Activated naive CD4-positive, alpha-beta T cell treated with anti-CD3 and anti-CD28 coated beads for 36 hours (primary cell): ENCODE measurements at regions of chr1 and their contacts with region 1.

Region 1: GRCh38 chr1:54406339-54407153 is at the start of gene SSBP3:
- DNase-seq: peak; percentile 89
- H3K4me3 Mint-ChIP-seq: peak within 1 kb of the TSS; percentile 83
- H3K27ac Mint-ChIP-seq: peak within 1 kb of the TSS; percentile 93
- H3K4me1 Mint-ChIP-seq: peaks cover 61% of the 10 kb centered on the region
- H3K27me3 Mint-ChIP-seq: no peaks in the 10 kb centered on the region
- total RNA-seq, gene SSBP3: 55.0 to 58.3 TPM

Region 2: DNA sequence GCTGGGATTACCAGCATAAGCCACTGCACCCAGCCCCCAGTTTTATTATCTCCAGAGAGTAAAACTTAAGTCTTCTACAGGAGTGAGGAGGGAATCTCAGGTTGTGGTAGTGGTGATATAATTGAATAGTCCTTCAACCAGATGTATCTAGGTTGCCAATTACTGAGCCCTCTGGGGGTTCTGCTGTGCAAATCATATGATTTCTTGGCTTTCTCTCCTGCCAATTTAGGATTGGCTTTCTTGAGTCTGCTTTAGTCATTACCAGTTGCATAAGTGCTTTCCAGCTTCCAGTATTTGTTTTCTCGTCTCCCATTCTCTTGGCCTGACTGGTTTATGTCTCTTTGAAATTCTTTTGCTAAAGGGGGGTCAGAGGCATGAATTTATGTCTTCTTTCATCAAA is 1198.8 kb before region 1 on chr1:
- CTCF ChIA-PET with region 1: no interaction called
- intact Hi-C with region 1: no loop called
- DNase-seq: no peak
- H3K4me3 Mint-ChIP-seq: no peak overlapping the region
- H3K27ac Mint-ChIP-seq: no peak overlapping the region
- H3K4me1 Mint-ChIP-seq: no peaks in the 10 kb centered on the region
- H3K27me3 Mint-ChIP-seq: no peaks in the 10 kb centered on the region

Region 3: DNA sequence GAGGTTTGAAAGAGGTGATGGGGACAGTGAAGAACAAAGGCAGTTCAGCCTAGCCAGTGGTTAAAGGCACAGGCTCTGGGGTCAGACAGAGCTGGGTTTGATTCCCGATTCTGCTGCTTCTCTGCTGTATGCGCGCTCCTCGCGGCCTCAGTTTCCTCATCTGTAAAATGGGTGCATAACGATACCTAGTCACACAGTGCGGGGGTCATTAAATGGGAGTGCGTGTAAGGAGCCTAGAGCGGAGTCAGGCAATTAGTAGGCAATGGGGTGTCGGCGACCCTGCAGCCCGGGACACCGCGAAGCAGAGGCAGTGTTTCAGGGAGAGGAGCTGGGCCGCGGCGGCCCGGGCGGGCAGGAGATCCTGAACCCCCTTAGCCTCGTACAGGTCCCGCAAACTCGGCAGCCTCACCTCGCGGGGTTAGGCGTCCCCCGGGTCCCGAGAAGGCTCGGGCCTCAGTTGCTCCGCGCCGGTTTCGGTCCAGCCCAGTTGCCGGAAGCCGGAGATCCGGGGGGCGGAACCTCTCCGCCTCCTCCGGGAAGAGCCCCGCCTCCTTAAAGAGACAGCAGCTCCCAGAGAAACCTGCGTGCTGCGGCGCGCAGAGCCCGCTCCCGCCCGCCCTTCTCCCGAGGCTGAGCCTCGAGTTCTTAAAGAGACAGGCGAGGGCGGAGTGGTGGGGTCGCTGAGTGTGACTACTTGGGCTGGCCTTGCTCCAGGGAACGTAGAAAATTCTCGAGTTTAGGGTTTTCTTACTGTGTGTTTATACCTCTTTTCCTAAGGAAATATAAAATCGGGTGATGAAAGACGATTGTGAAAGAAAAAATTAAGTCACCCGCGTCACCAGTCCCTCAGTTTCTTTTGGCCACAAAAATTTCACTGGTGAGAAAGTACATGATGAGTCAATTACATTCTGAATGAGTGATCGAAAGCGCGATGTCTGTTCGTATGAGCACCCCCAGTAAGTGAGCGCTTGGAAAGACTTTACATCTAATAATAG is 516.9 kb before region 1 on chr1 and contains the start of gene YIPF1:
- CTCF ChIA-PET with region 1: no interaction called
- intact Hi-C with region 1: loop called (anchors 10 kb)
- DNase-seq: peak; percentile 91
- H3K4me3 Mint-ChIP-seq: peak within 1 kb of the TSS; percentile 94
- H3K27ac Mint-ChIP-seq: peak within 1 kb of the TSS; percentile 99
- H3K4me1 Mint-ChIP-seq: peaks cover 39% of the 10 kb centered on the region
- H3K27me3 Mint-ChIP-seq: no peaks in the 10 kb centered on the region
- total RNA-seq, gene YIPF1: 22.2 to 22.4 TPM

Region 4: DNA sequence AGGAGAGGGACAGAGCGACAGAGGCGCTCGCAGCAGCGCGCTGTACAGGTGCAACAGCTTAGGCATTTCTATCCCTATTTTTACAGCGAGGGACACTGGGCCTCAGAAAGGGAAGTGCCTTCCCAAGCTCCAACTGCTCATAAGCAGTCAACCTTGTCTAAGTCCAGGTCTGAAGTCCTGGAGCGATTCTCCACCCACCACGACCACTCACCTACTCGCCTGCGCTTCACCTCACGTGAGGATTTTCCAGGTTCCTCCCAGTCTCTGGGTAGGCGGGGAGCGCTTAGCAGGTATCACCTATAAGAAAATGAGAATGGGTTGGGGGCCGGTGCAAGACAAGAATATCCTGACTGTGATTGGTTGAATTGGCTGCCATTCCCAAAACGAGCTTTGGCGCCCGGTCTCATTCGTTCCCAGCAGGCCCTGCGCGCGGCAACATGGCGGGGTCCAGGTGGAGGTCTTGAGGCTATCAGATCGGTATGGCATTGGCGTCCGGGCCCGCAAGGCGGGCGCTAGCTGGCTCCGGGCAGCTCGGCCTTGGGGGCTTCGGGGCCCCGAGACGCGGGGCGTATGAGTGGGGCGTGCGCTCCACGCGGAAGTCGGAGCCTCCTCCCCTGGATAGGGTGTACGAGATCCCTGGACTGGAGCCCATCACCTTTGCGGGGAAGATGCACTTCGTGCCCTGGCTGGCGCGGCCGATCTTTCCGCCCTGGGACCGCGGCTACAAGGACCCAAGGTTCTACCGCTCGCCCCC is 206.6 kb before region 1 on chr1 and contains the starts of genes CYB5RL and MRPL37:
- CTCF ChIA-PET with region 1: interaction called, 4 read pairs
- intact Hi-C with region 1: loop called (anchors 1 kb)
- DNase-seq: peak; percentile 96
- H3K4me3 Mint-ChIP-seq: peak within 1 kb of the TSS; percentile 92
- H3K27ac Mint-ChIP-seq: peak within 1 kb of the TSS; percentile 59
- H3K4me1 Mint-ChIP-seq: peaks cover 32% of the 10 kb centered on the region
- H3K27me3 Mint-ChIP-seq: no peaks in the 10 kb centered on the region
- total RNA-seq, gene CYB5RL: 12.7 to 13.6 TPM
- total RNA-seq, gene MRPL37: 203 to 211 TPM

Region 5: GRCh38 chr1:54376430-54377039 is 30.0 kb before region 1 on chr1:
- CTCF ChIA-PET with region 1: interaction called, 3 read pairs
- intact Hi-C with region 1: loop called (anchors 1 kb)
- DNase-seq: peak; percentile 74
- H3K4me3 Mint-ChIP-seq: no peak overlapping the region
- H3K27ac Mint-ChIP-seq: peak overlapping the region; percentile 33
- H3K4me1 Mint-ChIP-seq: peaks cover 84% of the 10 kb centered on the region
- H3K27me3 Mint-ChIP-seq: no peaks in the 10 kb centered on the region

Region 6: DNA sequence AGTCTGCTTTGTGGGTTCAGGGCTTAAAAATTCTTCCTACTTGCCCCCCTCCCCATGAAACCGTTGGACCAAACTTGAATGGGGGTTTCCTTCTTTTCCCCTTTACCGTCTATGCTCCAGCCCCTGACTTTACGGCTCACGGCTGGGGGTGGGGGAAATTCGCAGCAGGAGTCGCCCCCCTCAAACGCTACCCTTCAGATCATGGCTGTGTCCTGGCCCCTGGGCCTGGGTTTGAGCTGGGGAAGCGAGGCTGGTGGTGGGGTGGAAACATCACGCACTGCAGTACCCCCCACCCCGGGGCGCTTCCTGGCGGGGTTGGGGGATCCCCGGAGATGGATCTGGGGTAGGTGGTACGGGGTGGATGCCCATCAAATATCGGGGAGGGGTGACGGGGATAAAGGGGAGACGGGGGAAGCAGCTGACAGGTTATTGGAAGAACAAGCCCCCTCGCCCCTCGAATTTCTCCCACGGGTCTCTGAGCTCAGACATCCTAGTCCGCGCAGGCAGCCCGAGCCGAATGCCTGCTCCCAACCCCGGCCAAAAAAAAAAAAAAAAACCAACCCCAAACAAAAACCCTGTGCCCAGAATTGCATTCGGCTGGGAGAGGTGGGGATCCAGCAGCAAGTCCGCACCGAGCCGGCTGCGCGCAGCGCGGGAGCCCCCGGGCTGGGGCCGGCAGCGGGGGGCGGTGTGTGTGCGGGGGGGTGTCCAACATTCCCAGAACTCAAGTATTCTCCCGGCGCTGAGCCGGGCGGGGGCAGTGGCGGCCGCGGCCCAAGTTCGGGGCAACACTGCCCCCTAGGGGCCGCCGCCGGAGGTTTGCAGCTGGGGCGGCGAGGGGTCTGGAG is 82.5 kb after region 1 on chr1:
- CTCF ChIA-PET with region 1: interaction called, 18 read pairs
- intact Hi-C with region 1: loop called (anchors 1 kb)
- DNase-seq: peak; percentile 61
- H3K4me3 Mint-ChIP-seq: peak overlapping the region; percentile 76
- H3K27ac Mint-ChIP-seq: peak overlapping the region; percentile 63
- H3K4me1 Mint-ChIP-seq: peaks cover 37% of the 10 kb centered on the region
- H3K27me3 Mint-ChIP-seq: peaks cover 2% of the 10 kb centered on the region

Region 7: GRCh38 chr1:54764133-54764921 is 357.8 kb after region 1 on chr1 and contains the start of gene PARS2:
- CTCF ChIA-PET with region 1: no interaction called
- intact Hi-C with region 1: loop called (anchors 1 kb)
- DNase-seq: peak; percentile 96
- H3K4me3 Mint-ChIP-seq: peak within 1 kb of the TSS; percentile 94
- H3K27ac Mint-ChIP-seq: peak within 1 kb of the TSS; percentile 83
- H3K4me1 Mint-ChIP-seq: peaks cover 19% of the 10 kb centered on the region
- H3K27me3 Mint-ChIP-seq: no peaks in the 10 kb centered on the region
- total RNA-seq, gene PARS2: 3.0 to 3.1 TPM